IMR-90 (cell line): ENCODE measurements at regions of chr5 and their contacts with region 1.

Region 1: GRCh38 chr5:65481635-65482295 is at the start of gene ADAMTS6:
- DNase-seq: peak; percentile 99
- ATAC-seq: peak; percentile 85
- H3K4me3 ChIP-seq: peak within 1 kb of the TSS; percentile 88
- H3K27ac ChIP-seq: peak within 1 kb of the TSS; percentile 96
- H3K4me1 ChIP-seq: peaks cover 2% of the 10 kb centered on the region; the same call in 1 of the 2 replicates
- H3K27me3 ChIP-seq: no peaks in the 10 kb centered on the region
- CTCF ChIP-seq: no peak
- POLR2A ChIP-seq: peak; percentile 76; the same call in 1 of the 2 replicates
- RAD21 ChIP-seq: no peak
- total RNA-seq, gene ADAMTS6: 160 and 173 TPM in 2 replicates

Region 2: GRCh38 chr5:64634997-64635686 is 846.6 kb before region 1 on chr5:
- CTCF ChIA-PET with region 1: interaction called, 3 read pairs
- POLR2A ChIA-PET with region 1: no interaction called
- dilution Hi-C with region 1: no loop called
- in situ Hi-C with region 1: loop called (anchors 10 kb)
- intact Hi-C with region 1: loop called (anchors 2 kb)
- DNase-seq: peak; percentile 39
- ATAC-seq: peak; percentile 80
- H3K4me3 ChIP-seq: no peak overlapping the region
- H3K27ac ChIP-seq: no peak overlapping the region
- H3K4me1 ChIP-seq: no peaks in the 10 kb centered on the region; the same call in 1 of the 2 replicates
- H3K27me3 ChIP-seq: peaks cover 14% of the 10 kb centered on the region
- CTCF ChIP-seq: peak; percentile 85
- POLR2A ChIP-seq: no peak
- RAD21 ChIP-seq: peak; percentile 84

Region 3: GRCh38 chr5:64958757-64959391 is 522.9 kb before region 1 on chr5:
- CTCF ChIA-PET with region 1: interaction called, 10 read pairs
- POLR2A ChIA-PET with region 1: no interaction called
- dilution Hi-C with region 1: no loop called
- in situ Hi-C with region 1: loop called (anchors 10 kb)
- intact Hi-C with region 1: loop called (anchors 1 kb)
- DNase-seq: peak; percentile 72
- ATAC-seq: no peak; the same call in 1 of the 2 replicates
- H3K4me3 ChIP-seq: no peak overlapping the region
- H3K27ac ChIP-seq: peak overlapping the region; percentile 56; the same call in 1 of the 2 replicates
- H3K4me1 ChIP-seq: peaks cover 3% of the 10 kb centered on the region; the same call in 1 of the 2 replicates
- H3K27me3 ChIP-seq: no peaks in the 10 kb centered on the region
- CTCF ChIP-seq: peak; percentile 68
- POLR2A ChIP-seq: no peak
- RAD21 ChIP-seq: peak; percentile 76

Region 4: GRCh38 chr5:65102828-65103711 is 378.7 kb before region 1 on chr5:
- CTCF ChIA-PET with region 1: interaction called, 3 read pairs
- POLR2A ChIA-PET with region 1: no interaction called
- dilution Hi-C with region 1: no loop called
- in situ Hi-C with region 1: loop called (anchors 10 kb)
- intact Hi-C with region 1: loop called (anchors 1 kb)
- DNase-seq: peak; percentile 15
- ATAC-seq: peak; percentile 18
- H3K4me3 ChIP-seq: peak overlapping the region; percentile 21; the same call in 1 of the 2 replicates
- H3K27ac ChIP-seq: peak overlapping the region; percentile 91
- H3K4me1 ChIP-seq: peaks cover 18% of the 10 kb centered on the region
- H3K27me3 ChIP-seq: no peaks in the 10 kb centered on the region
- CTCF ChIP-seq: no peak
- POLR2A ChIP-seq: no peak
- RAD21 ChIP-seq: no peak

Region 5: GRCh38 chr5:65142511-65143011 is 339.2 kb before region 1 on chr5:
- CTCF ChIA-PET with region 1: interaction called, 4 read pairs
- POLR2A ChIA-PET with region 1: no interaction called
- dilution Hi-C with region 1: no loop called
- in situ Hi-C with region 1: no loop called
- intact Hi-C with region 1: loop called (anchors 5 kb)
- DNase-seq: peak; percentile 74
- ATAC-seq: peak; percentile 84
- H3K4me3 ChIP-seq: peak overlapping the region; percentile 30; the same call in 1 of the 2 replicates
- H3K27ac ChIP-seq: peak overlapping the region; percentile 100
- H3K4me1 ChIP-seq: peaks cover 18% of the 10 kb centered on the region
- H3K27me3 ChIP-seq: no peaks in the 10 kb centered on the region
- CTCF ChIP-seq: no peak
- POLR2A ChIP-seq: no peak
- RAD21 ChIP-seq: no peak

Region 6: DNA sequence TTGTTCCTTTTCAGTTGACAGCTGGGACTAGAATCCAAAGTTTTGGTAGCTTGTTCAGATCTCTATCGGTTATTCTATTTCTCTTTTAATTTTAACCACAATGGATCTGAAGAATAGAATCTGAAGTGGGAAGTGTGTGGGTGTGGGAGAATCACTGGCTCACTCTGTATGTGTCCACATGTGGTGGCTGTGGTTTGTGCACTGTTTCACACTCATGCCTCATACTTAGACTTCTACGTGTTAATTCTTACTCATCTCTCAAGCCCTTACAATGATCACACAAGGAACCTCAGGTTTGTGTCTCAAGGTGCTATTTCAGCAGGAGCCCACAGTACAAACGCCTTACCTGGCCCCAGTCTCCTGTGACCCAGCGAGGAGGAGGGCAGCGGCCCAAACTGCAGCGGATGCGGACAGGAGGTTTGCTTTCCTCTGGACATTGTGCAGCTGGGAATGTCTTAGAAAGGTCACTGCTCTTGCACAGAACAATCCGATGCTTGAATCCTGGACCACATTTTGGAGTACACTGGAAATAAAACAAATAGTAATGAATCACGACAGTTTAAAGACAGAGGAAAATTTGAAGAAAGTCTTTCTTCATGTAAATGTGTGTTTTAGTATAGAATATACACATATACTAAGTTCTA is 309.2 kb before region 1 on chr5:
- CTCF ChIA-PET with region 1: no interaction called
- POLR2A ChIA-PET with region 1: no interaction called
- dilution Hi-C with region 1: no loop called
- in situ Hi-C with region 1: no loop called
- intact Hi-C with region 1: no loop called
- DNase-seq: peak; percentile 87
- ATAC-seq: no peak
- H3K4me3 ChIP-seq: no peak overlapping the region
- H3K27ac ChIP-seq: no peak overlapping the region
- H3K4me1 ChIP-seq: no peaks in the 10 kb centered on the region; the same call in 1 of the 2 replicates
- H3K27me3 ChIP-seq: no peaks in the 10 kb centered on the region
- CTCF ChIP-seq: no peak
- POLR2A ChIP-seq: 0 out of 2 replicates have a peak, but pooled peaks have one; percentile 36
- RAD21 ChIP-seq: no peak

Region 7: DNA sequence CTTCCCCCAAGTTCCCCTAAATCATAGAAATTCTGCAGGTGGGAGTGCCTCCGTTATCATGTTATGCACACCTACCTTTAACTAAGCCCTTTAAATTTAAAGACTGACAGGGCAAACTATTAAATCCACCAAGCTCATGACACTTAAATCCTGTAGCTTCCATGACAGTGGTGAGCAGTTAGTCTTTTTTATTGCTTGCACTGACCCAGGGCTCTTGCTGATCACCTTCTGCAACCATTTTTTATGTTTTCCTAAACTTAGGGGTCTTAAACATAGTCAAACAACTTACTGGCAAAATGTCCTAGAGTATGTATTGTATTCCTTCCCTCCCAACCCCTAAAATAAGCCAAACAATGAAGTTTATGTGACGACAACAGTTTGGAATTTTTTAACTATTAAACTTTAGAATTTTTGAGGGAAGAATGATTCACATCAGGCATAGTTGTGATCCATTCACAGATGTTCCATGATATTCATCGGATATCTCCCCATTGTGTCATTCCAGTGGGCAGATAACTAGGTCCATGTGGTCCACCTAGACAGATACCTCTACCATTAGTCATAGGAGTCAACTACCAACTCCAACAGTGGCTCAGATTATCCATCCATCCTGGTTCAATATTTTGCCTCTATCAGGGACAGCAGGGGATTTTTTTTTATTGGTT is 283.2 kb before region 1 on chr5:
- CTCF ChIA-PET with region 1: no interaction called
- POLR2A ChIA-PET with region 1: interaction called, 4 read pairs
- dilution Hi-C with region 1: no loop called
- in situ Hi-C with region 1: loop called (anchors 5 kb)
- intact Hi-C with region 1: loop called (anchors 2 kb)
- DNase-seq: peak; percentile 99
- ATAC-seq: peak; percentile 85
- H3K4me3 ChIP-seq: no peak overlapping the region
- H3K27ac ChIP-seq: peak overlapping the region; percentile 81
- H3K4me1 ChIP-seq: peaks cover 11% of the 10 kb centered on the region
- H3K27me3 ChIP-seq: no peaks in the 10 kb centered on the region
- CTCF ChIP-seq: no peak
- POLR2A ChIP-seq: no peak
- RAD21 ChIP-seq: no peak